Dorsolateral prefrontal cortex (tissue), 120 donors: ENCODE measurements at regions of chr20 and their contacts with region 1.

Region 1: DNA sequence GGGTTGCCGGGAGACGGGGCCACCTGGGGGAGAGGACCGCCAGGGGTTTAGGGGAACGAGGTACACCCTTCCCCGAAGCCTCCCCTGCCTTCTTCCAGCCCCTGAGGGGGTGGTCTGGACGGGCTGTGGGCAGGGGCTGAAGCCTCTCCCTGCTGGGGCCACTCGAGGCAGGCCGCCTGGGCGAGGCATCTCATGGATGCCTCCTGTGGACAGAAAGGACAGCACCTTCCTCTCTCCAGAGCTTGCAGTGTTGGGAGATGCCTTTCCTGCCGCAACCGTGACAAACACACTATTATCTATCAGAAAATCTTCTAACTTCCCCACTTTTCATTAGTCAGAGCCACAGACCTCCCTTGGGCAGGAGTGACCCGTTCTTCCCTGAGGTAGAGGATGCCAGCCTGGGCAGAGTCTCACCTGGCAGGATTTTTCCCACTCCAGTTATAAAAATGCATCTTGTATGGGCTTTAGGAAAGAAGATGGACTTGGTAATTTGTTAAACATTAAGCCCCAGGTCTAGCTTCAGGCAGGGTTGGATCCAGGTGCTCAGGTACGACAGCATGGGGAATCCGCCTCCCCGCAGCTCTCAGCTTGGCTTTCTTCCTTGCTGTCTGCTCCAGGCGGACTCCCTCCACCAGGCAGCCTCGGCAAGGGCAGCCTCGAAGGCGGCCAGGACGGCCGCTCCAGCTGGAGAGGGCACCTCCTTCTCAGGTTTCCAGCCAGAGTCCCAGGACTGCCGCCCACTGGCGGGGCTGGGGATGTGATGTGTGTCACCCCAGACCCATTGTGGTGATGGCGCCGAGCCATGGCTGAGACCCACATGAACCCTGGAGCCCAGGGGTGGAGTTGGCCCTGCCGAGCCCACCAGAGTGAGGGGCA is 11.0 kb downstream of the HRH3 start:
- DNase-seq: no peak
- H3K4me3 ChIP-seq: no peak overlapping the region
- H3K27ac ChIP-seq: no peak overlapping the region
- H3K27me3 ChIP-seq: peaks cover 0 to 7% (median 0%) of the 10 kb centered on the region in 45 donors
- CTCF ChIP-seq: no peak

Region 2: GRCh38 chr20:62151835-62152364 is 57.2 kb before region 1 on chr20:
- intact Hi-C with region 1: loop called in 1 of 2 experiments (anchors 2 kb)
- DNase-seq: no peak
- H3K4me3 ChIP-seq: no peak overlapping the region
- H3K27ac ChIP-seq: no peak overlapping the region
- H3K27me3 ChIP-seq: no peaks in the 10 kb centered on the region
- CTCF ChIP-seq: no peak